ENCODE measurements at regions of chr7 and their contacts with region 1.

Region 1: DNA sequence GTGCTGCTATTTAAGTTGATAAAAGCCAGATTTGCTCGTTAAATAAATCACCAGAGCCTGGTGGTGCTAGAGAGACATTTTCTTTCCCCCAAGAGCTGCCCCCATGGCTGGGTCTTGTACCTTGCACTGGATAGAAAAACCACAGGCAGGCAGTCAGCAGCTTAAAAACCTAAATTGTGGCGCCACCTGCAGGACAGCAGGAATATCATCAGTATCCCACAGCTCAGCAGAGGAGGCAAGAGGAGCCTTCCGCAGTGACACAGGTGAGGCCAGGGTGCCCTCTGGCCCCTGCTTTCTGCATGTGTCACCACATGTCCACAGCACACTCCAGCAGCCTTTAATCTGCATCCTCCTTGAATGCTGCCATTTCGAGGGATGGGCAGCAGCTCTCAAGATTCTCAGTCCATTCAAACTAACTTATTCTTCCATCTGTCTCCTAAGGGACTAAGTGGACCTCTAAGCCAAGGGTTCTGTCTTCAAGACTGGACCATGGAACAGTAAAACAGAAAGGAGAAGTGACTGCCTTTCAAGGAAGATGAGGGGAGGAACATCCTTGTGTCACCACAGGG is 4.5 kb upstream of the PLXNA4 start:
- DNase-seq: peak; percentile 66 to 77 (median 70)
- ATAC-seq: peak; percentile 87 to 94 (median 90)
- H3K4me3 ChIP-seq: no peak overlapping the region
- H3K27ac ChIP-seq: no peak overlapping the region
- H3K4me1 ChIP-seq: peaks cover 0 to 8% (median 3%) of the 10 kb centered on the region in 4 donors
- H3K27me3 ChIP-seq: no peaks in the 10 kb centered on the region
- CTCF ChIP-seq: peak; percentile 73 to 81 (median 78)
- POLR2A ChIP-seq: no peak

Region 2: GRCh38 chr7:131945313-131945911 is 635.4 kb before region 1 on chr7:
- intact Hi-C with region 1: loop called in 1 of 2 experiments (anchors 10 kb)
- DNase-seq: peak; percentile 38 to 56 (median 49)
- ATAC-seq: peak; percentile 74 to 85 (median 82)
- H3K4me3 ChIP-seq: no peak overlapping the region
- H3K27ac ChIP-seq: no peak overlapping the region
- H3K4me1 ChIP-seq: peaks cover 0 to 8% (median 0%) of the 10 kb centered on the region in 4 donors
- H3K27me3 ChIP-seq: peaks cover 0 to 13% of the 10 kb centered on the region in 2 donors
- CTCF ChIP-seq: peak; percentile 57 to 89 (median 78)
- POLR2A ChIP-seq: no peak

Region 3: DNA sequence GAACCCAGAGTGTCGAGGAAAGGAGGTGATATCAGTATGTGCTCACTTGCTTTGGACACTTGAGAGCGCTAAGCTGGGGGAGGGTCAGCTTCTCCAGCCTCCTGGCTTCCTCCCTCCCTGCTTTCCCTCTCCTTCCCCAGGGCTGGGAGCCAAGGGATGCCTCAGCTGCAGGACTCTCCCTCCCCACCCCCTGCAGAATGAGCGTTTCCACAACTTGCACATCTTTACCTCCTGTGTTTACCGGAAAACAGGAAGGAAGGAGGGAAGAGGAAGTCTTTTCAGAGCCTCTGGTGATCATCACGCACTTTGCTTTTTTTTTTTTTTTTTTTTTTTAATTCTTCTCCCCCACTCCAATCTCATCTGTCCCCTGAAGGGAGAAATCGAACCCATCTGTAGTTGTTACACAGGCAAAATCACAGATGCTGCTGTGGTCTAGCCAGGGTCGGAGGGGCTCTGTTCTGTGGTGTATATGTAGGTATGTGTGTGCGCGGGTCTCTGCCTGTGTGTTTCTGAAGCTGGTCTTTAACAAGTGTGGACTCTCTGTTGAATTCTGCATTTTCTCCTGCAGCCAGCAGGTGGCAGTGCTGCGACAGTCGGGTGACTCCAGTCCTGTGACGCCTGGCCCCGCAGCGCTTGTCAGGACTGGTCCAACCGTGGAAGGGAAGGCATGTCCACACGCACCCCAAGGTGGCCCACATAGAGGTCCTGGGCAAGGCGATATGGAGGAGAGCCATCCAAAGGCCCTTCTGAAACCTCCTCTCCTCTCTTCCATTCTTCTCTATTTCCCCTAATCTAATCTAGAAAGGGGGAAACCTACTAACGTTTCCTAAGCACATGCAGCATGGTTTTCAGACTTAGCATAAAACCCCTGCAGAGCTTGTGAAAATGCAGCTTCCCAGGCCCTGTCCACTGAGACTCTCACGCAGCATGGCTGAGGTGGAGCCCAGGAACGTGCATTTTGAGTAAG is 262.2 kb before region 1 on chr7:
- intact Hi-C with region 1: loop called (anchors 5 kb)
- DNase-seq: peak; percentile 83 to 85 (median 83)
- ATAC-seq: peak; percentile 95 to 99 (median 97)
- H3K4me3 ChIP-seq: no peak overlapping the region
- H3K27ac ChIP-seq: no peak overlapping the region
- H3K4me1 ChIP-seq: peaks cover 0 to 6% (median 2%) of the 10 kb centered on the region in 4 donors
- H3K27me3 ChIP-seq: no peaks in the 10 kb centered on the region
- CTCF ChIP-seq: peak; percentile 84 to 92 (median 86)
- POLR2A ChIP-seq: no peak

Region 4: DNA sequence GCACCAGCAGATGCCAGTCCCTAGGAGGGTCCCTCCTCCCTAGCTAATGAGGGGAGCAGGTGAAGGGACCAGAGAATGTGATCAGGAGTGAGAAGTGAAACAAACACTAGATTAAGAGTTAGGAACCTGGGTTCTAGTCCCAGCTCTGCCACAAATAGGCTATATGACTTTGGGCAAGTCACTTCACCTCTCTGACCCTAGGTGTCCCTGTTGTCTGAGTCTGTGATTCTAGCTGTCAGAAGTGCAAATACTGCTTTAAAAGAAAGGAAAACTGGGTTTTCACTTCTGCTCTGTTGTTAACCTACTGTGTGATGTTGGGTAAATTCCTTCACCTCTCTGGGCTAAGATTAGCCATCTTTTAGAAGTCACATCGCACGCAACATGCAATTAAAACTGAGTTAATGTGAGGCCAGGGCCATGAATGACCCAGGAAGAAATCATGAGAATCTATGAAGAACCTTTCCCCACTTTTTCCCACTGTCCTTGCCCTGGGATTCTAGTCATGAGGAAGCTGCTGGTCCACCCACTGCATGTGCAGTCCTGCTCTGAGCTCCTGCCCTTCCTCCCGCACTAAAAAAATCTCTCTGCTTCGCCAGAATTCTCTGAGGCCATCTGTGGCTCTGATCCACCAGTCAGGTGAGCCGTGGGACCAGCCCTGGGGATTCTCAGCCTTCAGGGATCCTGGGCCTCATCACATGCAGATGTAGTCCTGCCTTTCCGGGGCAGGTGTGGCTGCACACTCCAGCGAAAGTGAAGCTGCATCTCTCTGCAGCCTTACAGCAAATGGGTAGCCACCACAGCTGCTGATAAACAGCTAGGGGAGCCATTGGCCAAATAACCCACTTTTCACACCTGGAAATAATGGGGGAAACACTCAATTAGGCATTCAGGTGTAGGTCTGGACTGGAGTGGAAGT is 186.3 kb before region 1 on chr7:
- intact Hi-C with region 1: loop called in 1 of 2 experiments (anchors 5 kb)
- DNase-seq: no peak
- ATAC-seq: peak; percentile 54 to 74 (median 59)
- H3K4me3 ChIP-seq: no peak overlapping the region
- H3K27ac ChIP-seq: no peak overlapping the region
- H3K4me1 ChIP-seq: no peaks in the 10 kb centered on the region
- H3K27me3 ChIP-seq: no peaks in the 10 kb centered on the region
- CTCF ChIP-seq: peak; percentile 36 to 44 (median 41)
- POLR2A ChIP-seq: no peak

Region 5: GRCh38 chr7:132846086-132846485 is 265.3 kb after region 1 on chr7:
- intact Hi-C with region 1: no loop called
- DNase-seq: no peak
- ATAC-seq: no peak
- H3K4me3 ChIP-seq: no peak overlapping the region
- H3K27ac ChIP-seq: no peak overlapping the region
- H3K4me1 ChIP-seq: no peaks in the 10 kb centered on the region
- H3K27me3 ChIP-seq: no peaks in the 10 kb centered on the region
- CTCF ChIP-seq: no peak
- POLR2A ChIP-seq: no peak